Activated naive CD4-positive, alpha-beta T cell treated with anti-CD3 and anti-CD28 coated beads for 36 hours (primary cell): ENCODE measurements at regions of chr4 and their contacts with region 1.

Region 1: GRCh38 chr4:178681871-178682270 is 1239.6 kb upstream of the AGA start:
- DNase-seq: no peak
- H3K4me3 Mint-ChIP-seq: no peak overlapping the region
- H3K27ac Mint-ChIP-seq: no peak overlapping the region
- H3K4me1 Mint-ChIP-seq: no peaks in the 10 kb centered on the region
- H3K27me3 Mint-ChIP-seq: no peaks in the 10 kb centered on the region

Region 2: GRCh38 chr4:177511311-177512001 is 1170.4 kb before region 1 on chr4:
- CTCF ChIA-PET with region 1: no interaction called
- intact Hi-C with region 1: no loop called
- DNase-seq: no peak
- H3K4me3 Mint-ChIP-seq: no peak overlapping the region
- H3K27ac Mint-ChIP-seq: no peak overlapping the region
- H3K4me1 Mint-ChIP-seq: no peaks in the 10 kb centered on the region
- H3K27me3 Mint-ChIP-seq: no peaks in the 10 kb centered on the region

Region 3: DNA sequence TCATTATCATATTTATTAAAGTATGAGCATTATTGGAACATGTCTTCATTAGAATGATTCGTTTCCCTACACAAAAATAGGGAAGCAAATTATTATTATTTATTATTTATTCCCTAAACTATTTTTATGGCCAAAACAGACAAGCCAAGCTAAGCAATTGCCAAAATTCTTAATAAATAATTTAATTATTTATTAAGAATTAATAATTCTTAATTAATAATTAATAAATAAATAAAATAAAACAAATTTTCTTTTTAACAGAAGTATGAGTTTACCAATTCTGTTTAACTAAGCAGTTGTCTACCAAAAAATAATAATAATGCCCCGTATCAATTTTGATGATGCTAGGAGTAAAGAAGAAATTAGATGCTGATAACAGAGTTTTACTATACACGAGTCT is 158.8 kb before region 1 on chr4:
- CTCF ChIA-PET with region 1: no interaction called
- intact Hi-C with region 1: no loop called
- DNase-seq: no peak
- H3K4me3 Mint-ChIP-seq: no peak overlapping the region
- H3K27ac Mint-ChIP-seq: no peak overlapping the region
- H3K4me1 Mint-ChIP-seq: no peaks in the 10 kb centered on the region
- H3K27me3 Mint-ChIP-seq: no peaks in the 10 kb centered on the region

Region 4: DNA sequence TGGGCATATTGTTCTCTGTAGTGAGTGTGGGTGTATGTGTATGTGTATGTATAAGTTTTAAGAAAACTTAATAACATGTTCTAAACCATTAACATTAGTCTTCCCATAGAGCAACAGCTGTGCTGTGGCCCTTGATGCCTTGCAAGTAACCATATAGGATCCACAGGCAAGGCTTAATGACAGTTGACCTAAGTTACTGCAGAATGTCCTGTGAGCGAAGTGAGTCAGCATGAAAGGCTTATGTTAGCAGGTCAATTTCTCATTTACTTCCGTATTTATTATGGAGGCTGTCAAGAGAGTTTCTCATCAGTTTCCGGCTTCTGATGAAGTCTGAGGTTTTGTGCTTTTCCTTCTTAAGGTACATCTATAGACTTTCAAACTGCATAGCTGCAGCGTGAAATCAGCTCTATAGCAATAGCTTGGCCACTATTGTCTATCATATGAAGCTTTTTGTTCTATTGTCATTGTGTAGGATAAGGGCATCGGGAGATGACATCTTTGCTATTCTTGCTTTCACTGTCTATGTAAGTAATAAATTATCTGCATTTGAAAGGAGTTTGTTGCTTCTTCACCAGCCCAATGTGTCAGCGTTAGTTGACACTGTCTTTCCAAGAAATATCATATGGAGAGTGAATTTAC is 86.3 kb before region 1 on chr4:
- CTCF ChIA-PET with region 1: no interaction called
- intact Hi-C with region 1: no loop called
- DNase-seq: no peak
- H3K4me3 Mint-ChIP-seq: no peak overlapping the region
- H3K27ac Mint-ChIP-seq: no peak overlapping the region
- H3K4me1 Mint-ChIP-seq: no peaks in the 10 kb centered on the region
- H3K27me3 Mint-ChIP-seq: no peaks in the 10 kb centered on the region

Region 5: GRCh38 chr4:178799204-178799603 is 117.3 kb after region 1 on chr4:
- CTCF ChIA-PET with region 1: no interaction called
- intact Hi-C with region 1: loop called (anchors 2 kb)
- DNase-seq: no peak
- H3K4me3 Mint-ChIP-seq: no peak overlapping the region
- H3K27ac Mint-ChIP-seq: no peak overlapping the region
- H3K4me1 Mint-ChIP-seq: no peaks in the 10 kb centered on the region
- H3K27me3 Mint-ChIP-seq: no peaks in the 10 kb centered on the region